ENCODE measurements at regions of chr10 and their contacts with region 1.

Region 1: GRCh38 chr10:122435212-122435827 is 19.1 kb upstream of the ARMS2 start:
- DNase-seq: peak; percentile 66
- ATAC-seq: no peak
- H3K4me3 ChIP-seq: no peak overlapping the region
- H3K4me3 Mint-ChIP-seq: no peak overlapping the region
- H3K27ac ChIP-seq: no peak overlapping the region
- H3K27ac Mint-ChIP-seq: no peak overlapping the region
- H3K4me1 ChIP-seq: no peaks in the 10 kb centered on the region
- H3K4me1 Mint-ChIP-seq: peaks cover 3% of the 10 kb centered on the region
- H3K27me3 ChIP-seq: no peaks in the 10 kb centered on the region
- H3K27me3 Mint-ChIP-seq: no peaks in the 10 kb centered on the region
- CTCF ChIP-seq: peak; percentile 88

Region 2: GRCh38 chr10:122267849-122268737 is 167.2 kb before region 1 on chr10:
- CTCF ChIA-PET with region 1: interaction called, 19 read pairs
- POLR2A ChIA-PET with region 1: no interaction called
- intact Hi-C with region 1: no loop called
- DNase-seq: peak; percentile 39
- ATAC-seq: peak; percentile 68
- H3K4me3 ChIP-seq: no peak overlapping the region
- H3K4me3 Mint-ChIP-seq: no peak overlapping the region
- H3K27ac ChIP-seq: no peak overlapping the region
- H3K27ac Mint-ChIP-seq: no peak overlapping the region
- H3K4me1 ChIP-seq: no peaks in the 10 kb centered on the region
- H3K4me1 Mint-ChIP-seq: no peaks in the 10 kb centered on the region
- H3K27me3 ChIP-seq: peaks cover 0 to 9% (median 0%) of the 10 kb centered on the region in 4 experiments
- H3K27me3 Mint-ChIP-seq: peaks cover 19% of the 10 kb centered on the region
- CTCF ChIP-seq: peak; percentile 91

Region 3: GRCh38 chr10:122307669-122308486 is 127.4 kb before region 1 on chr10:
- CTCF ChIA-PET with region 1: interaction called, 10 read pairs
- POLR2A ChIA-PET with region 1: no interaction called
- intact Hi-C with region 1: no loop called
- DNase-seq: peak; percentile 56
- ATAC-seq: peak; percentile 58
- H3K4me3 ChIP-seq: no peak overlapping the region
- H3K4me3 Mint-ChIP-seq: peak overlapping the region; percentile 60
- H3K27ac ChIP-seq: peak overlapping the region in 1 of 2 donors; percentile 6
- H3K27ac Mint-ChIP-seq: peak overlapping the region; percentile 83
- H3K4me1 ChIP-seq: peaks cover 20% of the 10 kb centered on the region in 2 donors
- H3K4me1 Mint-ChIP-seq: peaks cover 28% of the 10 kb centered on the region
- H3K27me3 ChIP-seq: peaks cover 0 to 3% (median 0%) of the 10 kb centered on the region in 4 experiments
- H3K27me3 Mint-ChIP-seq: peaks cover 15% of the 10 kb centered on the region
- CTCF ChIP-seq: no peak

Region 4: GRCh38 chr10:122348512-122348911 is 86.8 kb before region 1 on chr10:
- CTCF ChIA-PET with region 1: interaction called, 114 read pairs
- POLR2A ChIA-PET with region 1: no interaction called
- intact Hi-C with region 1: no loop called
- DNase-seq: peak; percentile 60
- ATAC-seq: peak; percentile 97
- H3K4me3 ChIP-seq: no peak overlapping the region
- H3K4me3 Mint-ChIP-seq: no peak overlapping the region
- H3K27ac ChIP-seq: no peak overlapping the region
- H3K27ac Mint-ChIP-seq: no peak overlapping the region
- H3K4me1 ChIP-seq: peaks cover 13 to 17% of the 10 kb centered on the region in 2 donors
- H3K4me1 Mint-ChIP-seq: peaks cover 14% of the 10 kb centered on the region
- H3K27me3 ChIP-seq: peaks cover 0 to 10% (median 1%) of the 10 kb centered on the region in 4 experiments
- H3K27me3 Mint-ChIP-seq: peaks cover 35% of the 10 kb centered on the region
- CTCF ChIP-seq: no peak

Region 5: DNA sequence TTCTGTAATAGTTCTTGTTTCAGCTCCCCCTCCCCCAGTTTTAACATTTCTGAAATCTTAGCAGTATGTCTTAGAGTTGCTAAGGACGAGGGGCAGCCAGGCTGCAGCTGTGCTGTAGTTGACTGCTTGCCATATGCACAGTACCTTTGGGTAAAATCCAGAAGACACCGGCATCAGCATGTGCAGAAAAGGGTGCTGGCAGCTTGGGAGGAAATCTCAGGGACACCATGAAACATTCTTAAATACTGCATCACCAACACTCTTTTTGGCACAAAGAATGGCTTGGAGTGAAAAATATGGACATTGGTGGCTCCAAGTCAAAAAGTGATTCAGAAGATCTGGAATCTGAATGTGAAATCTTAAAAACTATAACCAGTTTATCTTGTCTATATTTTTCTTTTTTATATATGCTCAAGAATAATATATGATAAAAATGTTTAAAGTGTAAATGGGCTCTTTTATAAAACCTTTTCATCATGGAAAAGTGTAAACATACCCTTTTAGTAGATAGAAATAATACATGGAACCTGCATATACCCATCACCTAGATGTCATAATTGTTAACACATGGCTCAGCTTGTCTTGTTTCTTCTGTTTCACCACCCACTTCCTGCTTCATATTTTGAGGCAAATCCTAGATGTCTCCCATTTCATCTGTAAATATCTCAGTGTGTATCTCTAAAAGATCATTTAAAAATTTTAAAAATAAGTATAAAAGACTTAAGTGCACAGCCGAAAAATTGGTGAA is 15.3 kb before region 1 on chr10:
- CTCF ChIA-PET with region 1: interaction called, 10 read pairs
- POLR2A ChIA-PET with region 1: no interaction called
- intact Hi-C with region 1: no loop called
- DNase-seq: no peak
- ATAC-seq: no peak
- H3K4me3 ChIP-seq: no peak overlapping the region
- H3K4me3 Mint-ChIP-seq: no peak overlapping the region
- H3K27ac ChIP-seq: peak overlapping the region; percentile 7 to 42
- H3K27ac Mint-ChIP-seq: no peak overlapping the region
- H3K4me1 ChIP-seq: peaks cover 34 to 73% of the 10 kb centered on the region in 2 donors
- H3K4me1 Mint-ChIP-seq: peaks cover 72% of the 10 kb centered on the region
- H3K27me3 ChIP-seq: no peaks in the 10 kb centered on the region
- H3K27me3 Mint-ChIP-seq: no peaks in the 10 kb centered on the region
- CTCF ChIP-seq: no peak

Region 6: GRCh38 chr10:122530177-122530576 is 94.9 kb after region 1 on chr10:
- CTCF ChIA-PET with region 1: no interaction called
- POLR2A ChIA-PET with region 1: no interaction called
- intact Hi-C with region 1: no loop called
- DNase-seq: no peak
- ATAC-seq: no peak
- H3K4me3 ChIP-seq: no peak overlapping the region
- H3K4me3 Mint-ChIP-seq: no peak overlapping the region
- H3K27ac ChIP-seq: no peak overlapping the region
- H3K27ac Mint-ChIP-seq: no peak overlapping the region
- H3K4me1 ChIP-seq: no peaks in the 10 kb centered on the region
- H3K4me1 Mint-ChIP-seq: no peaks in the 10 kb centered on the region
- H3K27me3 ChIP-seq: peaks cover 0 to 2% (median 0%) of the 10 kb centered on the region in 4 experiments
- H3K27me3 Mint-ChIP-seq: peaks cover 27% of the 10 kb centered on the region
- CTCF ChIP-seq: no peak

Region 7: DNA sequence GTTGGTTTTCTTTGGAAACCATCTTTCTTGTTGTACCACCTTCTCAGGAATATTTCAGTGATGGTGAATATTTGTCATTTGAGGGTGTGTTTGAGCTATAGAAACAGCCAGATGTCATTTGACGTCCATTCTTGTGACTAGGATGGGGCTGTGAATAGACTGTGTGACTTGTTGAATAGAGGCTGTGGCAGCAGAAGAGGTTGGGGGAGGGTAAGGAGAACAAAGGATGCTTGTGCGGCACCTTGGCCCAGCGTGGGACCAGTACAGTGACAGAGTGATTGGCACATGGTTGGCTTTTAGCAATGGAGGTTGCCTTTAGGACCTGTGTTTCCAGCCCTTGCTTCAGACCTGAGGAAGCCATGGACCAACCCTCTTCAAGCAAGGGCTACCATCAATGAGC is 136.6 kb after region 1 on chr10:
- CTCF ChIA-PET with region 1: no interaction called
- POLR2A ChIA-PET with region 1: no interaction called
- intact Hi-C with region 1: no loop called
- DNase-seq: no peak
- ATAC-seq: no peak
- H3K4me3 ChIP-seq: no peak overlapping the region
- H3K4me3 Mint-ChIP-seq: no peak overlapping the region
- H3K27ac ChIP-seq: no peak overlapping the region
- H3K27ac Mint-ChIP-seq: no peak overlapping the region
- H3K4me1 ChIP-seq: no peaks in the 10 kb centered on the region
- H3K4me1 Mint-ChIP-seq: no peaks in the 10 kb centered on the region
- H3K27me3 ChIP-seq: peaks cover 0 to 10% (median 0%) of the 10 kb centered on the region in 4 experiments
- H3K27me3 Mint-ChIP-seq: peaks cover 18% of the 10 kb centered on the region
- CTCF ChIP-seq: no peak

Measured in B cell (primary cell).